ENCODE measurements at regions of chr18 and their contacts with region 1.

Region 1: DNA sequence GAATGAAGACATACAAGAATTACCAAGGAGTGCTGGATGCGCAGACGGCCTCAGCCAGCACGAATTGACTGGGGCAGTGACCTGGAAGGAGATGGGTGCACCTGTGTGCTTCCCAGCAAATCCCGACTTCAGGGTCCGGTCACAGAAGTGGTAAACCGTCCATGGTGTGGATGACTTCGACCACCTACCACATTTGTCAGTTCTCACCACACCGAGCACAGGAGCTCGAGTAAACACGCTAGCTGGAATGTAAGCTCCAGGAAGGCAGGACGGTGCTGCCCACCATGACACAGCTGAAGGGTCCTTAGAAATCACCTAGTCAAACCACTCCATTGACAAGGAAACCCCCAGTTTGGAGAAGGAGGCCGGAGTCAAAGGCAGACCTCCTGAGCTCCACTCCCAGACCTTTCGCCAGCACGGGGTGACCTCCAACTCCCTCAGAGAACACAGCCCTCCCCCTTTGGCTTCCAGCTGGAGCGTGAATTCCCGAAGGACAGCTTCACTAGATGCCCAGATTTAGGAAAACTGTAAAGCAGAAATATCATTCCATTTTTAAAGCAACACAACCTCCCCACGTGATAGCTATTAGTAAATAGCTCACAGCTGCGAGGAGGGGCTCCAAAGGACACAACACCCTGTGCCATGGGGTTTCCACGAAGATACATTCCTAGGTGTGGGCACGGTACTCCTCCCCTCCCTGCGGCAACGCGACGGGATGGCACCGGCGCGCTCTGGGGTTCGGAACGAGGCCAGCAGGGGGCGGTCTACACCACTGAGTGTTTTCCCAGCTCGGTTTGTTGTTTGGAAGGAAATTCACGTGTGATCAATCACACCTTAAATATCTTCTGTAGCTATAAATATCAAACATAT is 34.1 kb upstream of the GNAL start:
- DNase-seq: peak; percentile 54
- H3K4me3 ChIP-seq: no peak overlapping the region
- H3K27ac ChIP-seq: no peak overlapping the region
- H3K4me1 ChIP-seq: peaks cover 31% of the 10 kb centered on the region
- H3K27me3 ChIP-seq: no peaks in the 10 kb centered on the region
- CTCF ChIP-seq: peak; percentile 94 to 95

Region 2: DNA sequence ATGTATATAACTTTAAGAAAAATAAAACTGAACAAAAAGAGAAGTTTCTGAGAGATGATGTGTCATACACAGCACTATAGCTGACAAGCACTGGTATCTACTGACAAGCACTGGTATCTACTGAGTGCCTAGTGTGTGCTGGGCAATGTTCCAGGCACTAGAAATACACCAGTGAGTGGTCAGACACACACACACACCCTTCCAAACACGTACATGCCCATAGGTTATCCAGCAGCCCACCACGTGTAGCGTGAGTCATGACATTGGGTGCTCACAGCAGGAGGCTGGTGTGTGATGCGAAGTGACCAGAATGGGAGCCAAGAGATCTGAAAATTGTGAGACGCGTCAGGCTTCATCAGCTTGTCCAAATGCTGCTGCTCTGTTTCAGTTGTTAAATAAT is 21.9 kb after region 1 on chr18:
- CTCF ChIA-PET with region 1: no interaction called
- dilution Hi-C with region 1: no loop called
- in situ Hi-C with region 1: no loop called
- intact Hi-C with region 1: no loop called
- DNase-seq: peak; percentile 70
- H3K4me3 ChIP-seq: no peak overlapping the region
- H3K27ac ChIP-seq: no peak overlapping the region
- H3K4me1 ChIP-seq: no peaks in the 10 kb centered on the region
- H3K27me3 ChIP-seq: no peaks in the 10 kb centered on the region
- CTCF ChIP-seq: no peak

Region 3: GRCh38 chr18:11688989-11689668 is 34.2 kb after region 1 on chr18 and contains the start of gene GNAL:
- CTCF ChIA-PET with region 1: interaction called, 4 read pairs
- dilution Hi-C with region 1: no loop called
- in situ Hi-C with region 1: no loop called
- intact Hi-C with region 1: loop called (anchors 1 kb)
- DNase-seq: peak; percentile 80
- H3K4me3 ChIP-seq: peak within 1 kb of the TSS; percentile 54 to 90 (median 81)
- H3K27ac ChIP-seq: peak within 1 kb of the TSS; percentile 2
- H3K4me1 ChIP-seq: peaks cover 4% of the 10 kb centered on the region
- H3K27me3 ChIP-seq: no peaks in the 10 kb centered on the region
- CTCF ChIP-seq: no peak
- total RNA-seq, gene GNAL: 35.0 to 40.8 TPM

Region 4: DNA sequence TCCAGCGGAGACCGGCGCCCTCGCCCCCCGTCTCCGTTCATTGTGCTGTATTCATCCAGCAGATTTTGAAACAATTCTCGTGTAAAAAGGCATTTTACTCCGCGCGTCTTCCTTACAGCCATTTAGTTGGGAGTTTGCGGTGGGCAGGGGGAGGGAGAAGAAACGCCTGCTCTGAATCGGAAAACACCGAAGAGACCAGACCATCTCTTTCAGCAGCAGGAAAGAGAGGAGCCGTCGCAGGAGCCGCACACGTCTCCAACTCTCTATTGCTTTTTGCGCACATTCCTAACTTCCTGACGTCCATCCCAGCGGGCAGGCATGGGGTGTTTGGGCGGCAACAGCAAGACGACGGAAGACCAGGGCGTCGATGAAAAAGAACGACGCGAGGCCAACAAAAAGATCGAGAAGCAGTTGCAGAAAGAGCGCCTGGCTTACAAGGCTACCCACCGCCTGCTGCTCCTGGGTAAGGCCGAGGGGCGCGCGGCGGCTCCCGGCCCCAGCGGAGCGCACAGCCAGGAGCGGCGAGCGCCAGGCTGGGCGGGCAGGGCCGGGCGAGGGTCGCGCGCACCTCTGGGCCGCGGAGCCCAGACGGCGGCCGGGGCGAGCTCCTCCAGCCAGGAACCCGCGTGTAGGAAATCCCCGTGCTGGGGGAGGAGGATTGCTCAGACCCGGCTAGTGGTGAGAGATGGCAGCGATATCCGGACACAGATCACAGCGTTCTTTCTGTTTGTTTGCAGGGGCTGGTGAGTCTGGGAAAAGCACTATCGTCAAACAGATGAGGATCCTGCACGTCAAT is 97.3 kb after region 1 on chr18:
- CTCF ChIA-PET with region 1: no interaction called
- dilution Hi-C with region 1: no loop called
- in situ Hi-C with region 1: no loop called
- intact Hi-C with region 1: no loop called
- DNase-seq: no peak
- H3K4me3 ChIP-seq: peak overlapping the region in 2 of 3 experiments; percentile 7 to 14
- H3K27ac ChIP-seq: no peak overlapping the region
- H3K4me1 ChIP-seq: peaks cover 3% of the 10 kb centered on the region
- H3K27me3 ChIP-seq: peaks cover 8% of the 10 kb centered on the region
- CTCF ChIP-seq: no peak

Region 5: GRCh38 chr18:11785458-11786055 is 130.6 kb after region 1 on chr18:
- CTCF ChIA-PET with region 1: no interaction called
- dilution Hi-C with region 1: no loop called
- in situ Hi-C with region 1: no loop called
- intact Hi-C with region 1: no loop called
- DNase-seq: no peak
- H3K4me3 ChIP-seq: no peak overlapping the region
- H3K27ac ChIP-seq: no peak overlapping the region
- H3K4me1 ChIP-seq: no peaks in the 10 kb centered on the region
- H3K27me3 ChIP-seq: no peaks in the 10 kb centered on the region
- CTCF ChIP-seq: no peak

Region 6: DNA sequence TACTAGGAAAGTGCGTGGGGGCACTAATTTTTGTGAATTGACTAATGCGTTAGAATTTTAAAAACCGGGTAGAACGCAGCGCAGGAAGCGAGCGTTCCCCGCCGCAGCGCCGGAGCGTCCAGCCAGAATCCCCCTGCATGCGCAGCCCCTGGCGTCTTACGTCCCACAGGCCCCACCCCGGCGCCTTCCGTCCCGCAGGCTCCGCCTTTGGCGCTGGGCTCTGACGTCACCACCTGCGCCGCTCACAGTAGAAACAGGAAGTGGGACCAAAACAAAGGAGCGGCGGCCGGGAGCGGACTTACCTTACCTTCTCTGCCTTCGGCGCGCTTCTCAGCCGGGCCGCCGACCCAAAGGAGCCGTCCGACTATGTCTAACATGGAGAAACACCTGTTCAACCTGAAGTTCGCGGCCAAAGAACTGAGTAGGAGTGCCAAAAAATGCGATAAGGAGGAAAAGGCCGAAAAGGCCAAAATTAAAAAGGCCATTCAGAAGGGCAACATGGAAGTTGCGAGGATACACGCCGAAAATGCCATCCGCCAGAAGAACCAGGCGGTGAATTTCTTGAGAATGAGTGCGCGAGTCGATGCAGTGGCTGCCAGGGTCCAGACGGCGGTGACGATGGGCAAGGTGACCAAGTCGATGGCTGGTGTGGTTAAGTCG is 196.3 kb after region 1 on chr18 and contains the start of gene CHMP1B:
- CTCF ChIA-PET with region 1: no interaction called
- dilution Hi-C with region 1: no loop called
- in situ Hi-C with region 1: loop called in 1 of 2 experiments (anchors 25 kb)
- intact Hi-C with region 1: loop called (anchors 1 kb)
- DNase-seq: peak; percentile 95
- H3K4me3 ChIP-seq: peak within 1 kb of the TSS; percentile 55 to 85 (median 77)
- H3K27ac ChIP-seq: peak within 1 kb of the TSS; percentile 96
- H3K4me1 ChIP-seq: peaks cover 19% of the 10 kb centered on the region
- H3K27me3 ChIP-seq: no peaks in the 10 kb centered on the region
- CTCF ChIP-seq: no peak
- total RNA-seq, gene CHMP1B: 46.7 to 76.5 TPM

Region 7: GRCh38 chr18:11891737-11892136 is 236.8 kb after region 1 on chr18:
- CTCF ChIA-PET with region 1: no interaction called
- dilution Hi-C with region 1: no loop called
- in situ Hi-C with region 1: no loop called
- intact Hi-C with region 1: no loop called
- DNase-seq: no peak
- H3K4me3 ChIP-seq: no peak overlapping the region
- H3K27ac ChIP-seq: no peak overlapping the region
- H3K4me1 ChIP-seq: no peaks in the 10 kb centered on the region
- H3K27me3 ChIP-seq: no peaks in the 10 kb centered on the region
- CTCF ChIP-seq: no peak

Region 8: GRCh38 chr18:11908182-11909060 is 253.4 kb after region 1 on chr18 and contains the start of gene MPPE1:
- CTCF ChIA-PET with region 1: no interaction called
- dilution Hi-C with region 1: no loop called
- in situ Hi-C with region 1: no loop called
- intact Hi-C with region 1: loop called (anchors 5 kb)
- DNase-seq: peak; percentile 82
- H3K4me3 ChIP-seq: peak within 1 kb of the TSS; percentile 71 to 92 (median 85)
- H3K27ac ChIP-seq: peak within 1 kb of the TSS; percentile 90
- H3K4me1 ChIP-seq: peaks cover 6% of the 10 kb centered on the region
- H3K27me3 ChIP-seq: no peaks in the 10 kb centered on the region
- CTCF ChIP-seq: no peak
- total RNA-seq, gene MPPE1: 27.2 to 33.6 TPM

Region 9: DNA sequence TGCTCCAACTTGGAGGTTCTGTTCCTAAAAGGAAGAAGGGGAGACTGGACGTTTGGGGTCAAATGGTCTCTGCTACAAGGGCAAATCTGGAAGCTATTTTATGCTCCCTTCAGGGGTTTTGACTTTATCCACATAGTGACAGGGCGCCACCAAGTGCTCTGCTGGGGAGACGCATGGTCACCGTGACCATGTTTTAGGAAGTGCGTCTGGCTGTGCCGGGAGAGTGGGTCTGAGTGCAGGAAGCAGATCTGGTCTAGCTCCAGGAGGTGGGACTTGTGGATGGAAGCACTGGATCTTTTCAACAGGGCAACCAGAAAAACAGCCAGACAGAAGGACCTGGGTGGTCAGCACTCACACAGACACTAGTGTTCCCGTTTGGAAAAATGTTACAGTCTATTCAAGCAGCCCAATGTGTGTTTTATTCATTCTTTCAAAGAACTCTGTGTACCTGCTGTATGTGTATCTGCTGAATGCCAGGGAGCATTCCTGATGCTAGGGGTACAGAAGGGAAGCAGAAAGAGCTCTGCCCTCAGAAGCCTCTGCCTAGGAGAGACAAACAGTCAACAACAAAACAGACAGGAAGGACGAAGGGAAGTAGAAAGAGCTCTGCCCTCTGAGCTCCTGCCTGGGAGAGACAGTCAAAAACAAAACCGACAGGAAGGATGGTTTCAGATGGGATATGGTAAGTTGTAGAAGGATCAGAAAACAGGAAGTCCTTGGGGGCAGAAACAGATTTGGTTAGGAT is 340.6 kb after region 1 on chr18:
- CTCF ChIA-PET with region 1: interaction called, 4 read pairs
- dilution Hi-C with region 1: no loop called
- in situ Hi-C with region 1: loop called in 1 of 2 experiments (anchors 25 kb)
- intact Hi-C with region 1: loop called (anchors 2 kb)
- DNase-seq: peak; percentile 54
- H3K4me3 ChIP-seq: no peak overlapping the region
- H3K27ac ChIP-seq: no peak overlapping the region
- H3K4me1 ChIP-seq: peaks cover 14% of the 10 kb centered on the region
- H3K27me3 ChIP-seq: no peaks in the 10 kb centered on the region
- CTCF ChIP-seq: peak; percentile 66 to 79

Region 10: DNA sequence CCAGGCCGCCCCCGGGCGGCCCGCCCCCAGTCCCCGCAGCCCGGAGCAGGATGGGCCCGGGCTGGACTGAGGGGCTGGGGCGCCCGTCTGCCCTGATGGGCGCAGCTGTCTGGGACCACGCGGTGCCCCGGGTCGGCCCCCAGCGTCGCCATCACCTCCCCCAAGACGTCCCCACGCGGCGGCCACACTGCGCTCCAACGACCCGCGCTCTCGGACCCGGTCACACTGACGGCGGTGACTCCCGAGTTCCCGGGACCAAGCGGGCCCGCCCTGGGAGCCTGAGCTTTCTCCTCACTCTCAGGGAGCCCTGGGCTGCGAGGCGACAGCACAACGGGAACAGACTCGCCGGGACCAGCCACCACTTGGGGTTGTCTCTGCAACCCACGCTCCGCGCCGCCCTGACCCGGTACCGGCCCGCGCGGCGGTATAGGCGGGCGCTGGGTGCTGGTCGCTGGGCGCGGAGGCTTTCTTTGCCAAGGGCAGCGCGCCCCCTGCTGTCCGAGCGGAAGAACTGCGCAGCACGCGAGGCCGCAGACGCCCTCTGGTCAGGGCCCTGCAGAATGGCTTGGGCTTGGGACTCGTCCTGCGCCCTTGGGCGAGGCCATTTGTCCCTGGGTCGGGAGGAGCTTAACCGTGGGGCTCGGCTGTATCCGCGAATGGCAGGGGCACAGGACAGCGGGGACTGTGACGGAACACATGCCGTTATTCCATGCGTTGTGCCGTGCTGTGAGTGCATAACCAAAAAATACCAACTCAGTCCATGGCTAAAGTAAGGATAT is 383.9 kb after region 1 on chr18:
- CTCF ChIA-PET with region 1: no interaction called
- dilution Hi-C with region 1: no loop called
- in situ Hi-C with region 1: loop called in 1 of 2 experiments (anchors 25 kb)
- intact Hi-C with region 1: loop called (anchors 2 kb)
- DNase-seq: peak; percentile 61
- H3K4me3 ChIP-seq: peak overlapping the region; percentile 33 to 53 (median 41)
- H3K27ac ChIP-seq: peak overlapping the region; percentile 22
- H3K4me1 ChIP-seq: peaks cover 20% of the 10 kb centered on the region
- H3K27me3 ChIP-seq: no peaks in the 10 kb centered on the region
- CTCF ChIP-seq: peak; percentile 73 to 93

Measured in mammary epithelial cell (primary cell).